ENCODE measurements at regions of chr17 and their contacts with region 1.

Region 1: DNA sequence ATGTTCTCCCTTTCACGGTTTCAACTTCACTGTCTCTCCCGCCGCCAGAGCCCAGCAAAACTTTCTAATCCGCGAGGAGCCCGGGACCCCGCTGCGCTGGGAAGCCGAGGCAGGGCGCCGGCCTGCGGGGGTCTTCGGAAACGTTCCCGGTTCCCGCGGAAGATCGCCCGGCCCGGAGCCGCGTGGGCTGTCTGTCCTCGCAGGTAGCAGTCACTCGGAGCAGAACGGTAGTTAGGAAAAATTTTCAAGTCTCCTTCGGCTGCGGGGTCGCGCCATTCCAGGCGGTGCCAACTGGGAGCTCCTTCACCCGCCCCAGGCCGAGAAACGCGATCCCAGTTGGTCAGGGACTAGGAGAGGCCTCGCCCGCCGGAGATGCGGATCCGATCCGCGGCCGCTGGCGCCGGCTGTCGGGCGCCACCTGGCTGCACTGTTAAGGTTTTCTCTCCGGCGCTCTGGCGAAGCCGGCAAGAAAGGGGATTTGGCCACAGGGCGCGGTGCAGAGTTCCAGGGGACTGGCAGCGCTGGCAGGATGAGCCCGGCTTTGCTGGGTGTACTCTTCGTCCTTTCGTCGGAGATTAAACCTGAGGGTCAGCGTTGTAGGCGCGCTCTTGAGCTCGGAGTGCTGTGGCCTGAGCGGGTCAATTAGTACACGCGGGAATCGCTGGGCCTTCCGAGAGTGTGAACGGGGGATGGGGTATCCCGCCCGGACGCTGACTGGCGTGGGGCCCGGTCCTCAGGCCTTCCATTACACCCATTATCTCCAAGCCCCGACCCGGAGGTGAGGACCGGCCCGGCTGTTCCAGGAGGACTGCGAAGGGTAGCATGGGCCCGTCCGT is 135.4 kb downstream of the KCNJ12 start:
- DNase-seq: peak; percentile 69
- H3K4me3 ChIP-seq: peak overlapping the region; percentile 30
- H3K27ac ChIP-seq: peak overlapping the region; percentile 10 to 47
- H3K4me1 ChIP-seq: no peaks in the 10 kb centered on the region
- H3K27me3 ChIP-seq: no peaks in the 10 kb centered on the region
- CTCF ChIP-seq: peak; percentile 67 to 71 (median 68)
- POLR2A ChIP-seq: no peak

Region 2: DNA sequence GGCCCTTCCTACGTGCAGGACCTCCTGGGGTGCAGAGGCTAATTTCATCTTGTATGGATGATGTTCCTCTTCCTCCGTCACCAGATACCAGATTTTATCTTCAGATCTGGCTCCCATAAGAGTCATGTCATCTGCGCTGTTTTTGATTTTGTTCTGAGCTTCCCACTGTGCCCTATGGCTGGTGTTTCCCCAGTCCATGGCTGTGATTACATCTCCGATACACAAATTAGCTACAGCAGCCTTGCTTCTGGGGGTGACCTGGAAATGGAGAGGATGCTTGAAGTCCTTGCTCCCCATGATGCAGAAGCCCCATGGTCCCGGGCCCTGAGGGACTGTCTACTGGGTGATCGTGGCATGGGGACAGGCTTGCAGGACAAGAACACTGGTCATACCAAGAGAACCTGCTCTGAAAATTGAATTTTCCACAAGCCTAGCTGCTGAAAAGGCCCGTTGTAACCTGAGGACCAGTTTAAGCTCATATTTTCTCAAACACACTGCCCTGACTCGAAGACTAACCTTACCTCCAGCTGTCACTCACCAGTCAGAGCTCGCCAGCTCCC is 66.4 kb before region 1 on chr17:
- intact Hi-C with region 1: no loop called
- DNase-seq: no peak
- H3K4me3 ChIP-seq: no peak overlapping the region
- H3K27ac ChIP-seq: no peak overlapping the region
- H3K4me1 ChIP-seq: no peaks in the 10 kb centered on the region
- H3K27me3 ChIP-seq: no peaks in the 10 kb centered on the region
- CTCF ChIP-seq: no peak
- POLR2A ChIP-seq: no peak

Region 3: GRCh38 chr17:21457051-21458026 is 54.2 kb before region 1 on chr17:
- intact Hi-C with region 1: loop called (anchors 2 kb)
- DNase-seq: peak; percentile 77
- H3K4me3 ChIP-seq: no peak overlapping the region
- H3K27ac ChIP-seq: no peak overlapping the region
- H3K4me1 ChIP-seq: no peaks in the 10 kb centered on the region
- H3K27me3 ChIP-seq: no peaks in the 10 kb centered on the region
- CTCF ChIP-seq: peak; percentile 87 to 92 (median 89)
- POLR2A ChIP-seq: no peak

Measured in prostate gland (tissue), 2 donors.